Endothelial cell of umbilical vein (primary cell): ENCODE measurements at regions of chr7 and their contacts with region 1.

Region 1: DNA sequence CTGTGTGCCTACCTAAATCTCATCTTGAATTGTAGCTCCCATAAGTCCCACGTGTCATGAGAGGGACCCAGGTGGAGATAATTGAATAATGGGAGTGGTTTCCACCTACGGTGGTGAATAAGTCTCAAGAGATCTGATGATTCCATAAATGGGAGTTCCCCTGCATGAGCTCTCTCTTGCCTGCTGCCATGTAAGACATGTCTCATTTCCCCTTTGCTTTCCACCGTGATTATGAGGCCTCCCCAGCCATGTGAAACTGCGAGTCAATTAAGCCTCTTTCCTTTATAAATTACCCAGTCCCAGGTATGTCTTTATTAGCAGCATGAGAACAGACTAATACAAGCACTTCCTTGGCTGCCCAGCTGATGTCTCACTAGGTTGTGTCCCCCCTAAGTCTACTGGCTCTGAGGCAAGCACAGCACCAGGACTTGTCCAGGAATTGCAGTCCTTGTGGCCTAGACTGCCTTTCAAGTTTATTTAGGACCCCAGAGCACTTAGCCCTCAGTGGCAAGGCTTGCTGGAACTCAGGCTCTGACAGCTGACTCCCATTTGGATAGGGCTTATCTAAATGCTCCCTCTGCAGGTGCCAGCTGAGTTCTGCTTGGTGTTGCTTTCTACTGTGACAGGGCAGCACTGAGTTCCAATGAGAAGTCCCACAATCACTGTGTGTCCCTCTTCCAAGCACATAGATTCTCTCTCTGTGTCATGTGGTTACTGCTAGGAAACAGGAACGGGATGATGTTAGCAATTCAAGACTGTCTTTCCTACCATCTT is 59.0 kb upstream of the TAS2R16 start:
- DNase-seq: peak; percentile 55
- H3K4me3 ChIP-seq: no peak overlapping the region
- H3K27ac ChIP-seq: no peak overlapping the region
- H3K4me1 ChIP-seq: no peaks in the 10 kb centered on the region
- H3K27me3 ChIP-seq: no peaks in the 10 kb centered on the region
- CTCF ChIP-seq: peak in 1 of 2 donors; percentile 44
- POLR2A ChIP-seq: no peak

Region 2: GRCh38 chr7:122550545-122550944 is 504.0 kb before region 1 on chr7:
- CTCF ChIA-PET with region 1: no interaction called
- POLR2A ChIA-PET with region 1: no interaction called
- dilution Hi-C with region 1: no loop called
- intact Hi-C with region 1: loop called (anchors 10 kb)
- DNase-seq: peak; percentile 63
- H3K4me3 ChIP-seq: no peak overlapping the region
- H3K27ac ChIP-seq: no peak overlapping the region
- H3K4me1 ChIP-seq: no peaks in the 10 kb centered on the region
- H3K27me3 ChIP-seq: no peaks in the 10 kb centered on the region
- CTCF ChIP-seq: peak in 1 of 2 donors; percentile 20
- POLR2A ChIP-seq: no peak

Region 3: DNA sequence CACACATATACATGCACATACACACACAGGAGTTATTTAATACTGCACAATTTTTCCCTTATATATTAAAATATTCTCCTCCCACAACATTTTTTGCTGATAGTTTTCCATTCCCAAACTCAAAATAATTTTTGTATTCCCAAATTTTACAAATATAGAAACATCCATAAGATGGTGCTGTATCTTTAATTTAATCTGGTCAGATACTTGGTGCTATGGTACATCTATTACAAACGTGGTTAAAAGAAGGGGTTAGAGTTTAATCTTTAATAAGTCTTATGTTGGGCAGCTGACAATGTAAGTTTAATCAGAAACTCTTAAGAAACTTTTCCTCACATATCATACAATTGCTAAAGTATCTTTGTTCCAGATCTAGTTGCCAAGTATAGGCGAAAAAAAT is 158.0 kb before region 1 on chr7:
- CTCF ChIA-PET with region 1: no interaction called
- POLR2A ChIA-PET with region 1: no interaction called
- dilution Hi-C with region 1: no loop called
- intact Hi-C with region 1: loop called (anchors 1 kb)
- DNase-seq: no peak
- H3K4me3 ChIP-seq: no peak overlapping the region
- H3K27ac ChIP-seq: no peak overlapping the region
- H3K4me1 ChIP-seq: no peaks in the 10 kb centered on the region
- H3K27me3 ChIP-seq: no peaks in the 10 kb centered on the region
- CTCF ChIP-seq: no peak
- POLR2A ChIP-seq: no peak